SK-N-SH (cell line): ENCODE measurements at regions of chr22 and their contacts with region 1.

Region 1: GRCh38 chr22:31749636-31750364 is at the start of gene PRR14L:
- DNase-seq: peak; percentile 96
- H3K4me3 ChIP-seq: peak within 1 kb of the TSS; percentile 84 to 86
- H3K27ac ChIP-seq: peak within 1 kb of the TSS; percentile 73 to 86
- H3K4me1 ChIP-seq: peaks cover 12 to 31% of the 10 kb centered on the region in 2 experiments
- H3K27me3 ChIP-seq: no peaks in the 10 kb centered on the region
- CTCF ChIP-seq: no peak; the same call in 1 of the 2 replicates
- EP300 ChIP-seq: peak; percentile 85 to 86
- RAD21 ChIP-seq: peak; percentile 44; the same call in 1 of the 2 replicates
- polyA plus RNA-seq, gene PRR14L: 5.9 and 7.4 TPM in 2 replicates

Region 2: DNA sequence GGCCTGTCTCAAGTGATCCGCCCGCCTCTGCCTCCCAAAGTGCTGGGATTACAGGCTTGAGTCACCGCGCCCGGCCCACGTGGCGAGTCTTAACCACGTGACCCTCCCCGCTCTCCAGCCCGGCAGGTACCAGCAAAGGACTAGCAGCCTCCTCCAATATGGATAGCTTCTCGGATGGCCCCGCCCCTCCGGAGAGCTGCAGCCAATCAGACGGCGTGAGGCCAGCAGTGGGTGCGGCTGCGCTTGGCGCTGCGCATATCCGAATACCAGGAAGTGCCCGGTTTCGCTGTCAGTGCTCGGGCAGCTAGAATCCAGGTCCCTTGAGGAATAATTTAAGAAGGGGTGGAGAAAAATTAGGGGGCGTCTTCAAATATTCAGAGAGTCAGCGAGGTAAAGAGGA is 73.1 kb before region 1 on chr22:
- CTCF ChIA-PET with region 1: interaction called, 4 read pairs
- POLR2A ChIA-PET with region 1: interaction called, 10 read pairs
- DNase-seq: peak; percentile 94
- H3K4me3 ChIP-seq: peak overlapping the region; percentile 47 to 49
- H3K27ac ChIP-seq: peak overlapping the region in 1 of 2 experiments; percentile 29; a peak in 1 of 4 replicates
- H3K4me1 ChIP-seq: peaks cover 2 to 13% of the 10 kb centered on the region in 2 experiments; a peak in 3 of 4 replicates
- H3K27me3 ChIP-seq: no peaks in the 10 kb centered on the region
- CTCF ChIP-seq: no peak
- EP300 ChIP-seq: no peak
- RAD21 ChIP-seq: no peak

Region 3: DNA sequence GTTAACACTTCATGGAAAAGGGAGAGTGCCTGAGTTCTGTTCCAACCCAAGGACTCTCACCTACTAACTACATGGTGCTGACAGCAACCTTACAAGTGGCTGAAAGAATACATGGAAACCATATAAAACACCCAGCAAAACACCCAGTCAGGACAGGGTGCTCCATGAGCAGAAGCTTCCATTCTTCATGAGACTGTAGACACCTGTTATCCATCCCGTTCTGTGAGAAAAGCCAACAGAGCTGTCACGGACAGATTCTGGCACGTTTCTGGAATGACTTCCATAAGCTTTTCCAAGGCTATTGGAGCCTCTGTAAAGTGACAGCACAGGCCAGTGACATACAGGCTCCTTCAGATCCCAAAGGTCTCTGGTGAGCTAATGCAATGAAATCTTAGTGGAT is 23.1 kb before region 1 on chr22:
- CTCF ChIA-PET with region 1: no interaction called
- POLR2A ChIA-PET with region 1: no interaction called
- DNase-seq: no peak
- H3K4me3 ChIP-seq: no peak overlapping the region
- H3K27ac ChIP-seq: no peak overlapping the region
- H3K4me1 ChIP-seq: no peaks in the 10 kb centered on the region
- H3K27me3 ChIP-seq: no peaks in the 10 kb centered on the region
- CTCF ChIP-seq: no peak
- EP300 ChIP-seq: no peak
- RAD21 ChIP-seq: no peak

Region 4: DNA sequence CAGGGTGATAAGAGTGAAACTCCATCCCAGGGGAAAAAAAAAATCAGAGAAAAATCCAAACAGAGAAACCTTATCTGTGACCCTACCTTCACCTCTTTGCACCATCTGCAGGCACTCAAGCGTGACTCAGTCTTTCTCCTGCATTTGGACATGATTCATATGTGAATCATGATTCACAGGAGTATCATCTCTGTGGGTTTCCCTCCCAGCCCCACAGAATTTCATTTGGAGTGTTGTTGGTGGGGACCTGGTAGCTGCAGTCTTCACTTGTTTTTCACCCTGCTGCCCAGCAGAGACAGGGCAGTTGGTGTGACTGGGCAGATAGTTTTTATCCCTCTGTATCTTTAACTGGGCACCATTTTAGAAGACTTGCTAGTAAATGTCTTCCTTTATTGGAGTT is 79.7 kb after region 1 on chr22:
- CTCF ChIA-PET with region 1: no interaction called
- POLR2A ChIA-PET with region 1: no interaction called
- DNase-seq: peak; percentile 47
- H3K4me3 ChIP-seq: peak overlapping the region in 1 of 2 experiments; percentile 41; a peak in 1 of 4 replicates
- H3K27ac ChIP-seq: peak overlapping the region; percentile 74 to 99
- H3K4me1 ChIP-seq: peaks cover 4 to 13% of the 10 kb centered on the region in 2 experiments
- H3K27me3 ChIP-seq: no peaks in the 10 kb centered on the region
- CTCF ChIP-seq: no peak; the same call in 1 of the 2 replicates
- EP300 ChIP-seq: peak; percentile 64 to 87
- RAD21 ChIP-seq: 0 out of 2 replicates have a peak, but pooled peaks have one; percentile 12

Region 5: DNA sequence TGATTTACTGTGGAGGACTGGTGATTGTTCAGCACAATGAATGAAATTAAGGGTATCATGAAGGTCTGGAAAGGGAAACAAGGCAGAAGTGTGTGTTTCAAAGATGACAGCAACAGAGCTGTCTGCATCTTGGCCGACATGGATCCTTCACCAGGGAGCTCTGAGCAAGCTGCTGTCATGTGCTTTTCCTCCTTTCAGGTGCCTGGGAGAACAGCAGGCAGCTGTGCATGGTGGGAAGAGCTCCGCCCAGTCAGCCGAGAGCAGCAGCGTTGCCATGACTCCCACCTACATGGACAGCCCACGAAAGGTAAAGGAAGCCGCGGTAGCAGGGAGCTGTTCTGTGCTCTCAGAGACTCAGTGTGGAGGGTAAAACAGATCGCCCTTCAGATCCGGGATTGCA is 107.4 kb after region 1 on chr22:
- CTCF ChIA-PET with region 1: no interaction called
- POLR2A ChIA-PET with region 1: no interaction called
- DNase-seq: no peak
- H3K4me3 ChIP-seq: no peak overlapping the region
- H3K27ac ChIP-seq: no peak overlapping the region
- H3K4me1 ChIP-seq: peaks cover 0 to 4% of the 10 kb centered on the region in 2 experiments; a peak in 1 of 4 replicates
- H3K27me3 ChIP-seq: no peaks in the 10 kb centered on the region
- CTCF ChIP-seq: no peak
- EP300 ChIP-seq: no peak
- RAD21 ChIP-seq: no peak